ENCODE measurements at regions of chr11 and their contacts with region 1.

Region 1: GRCh38 chr11:107741044-107741823 is 29.4 kb upstream of the SLN start:
- DNase-seq: peak; percentile 52
- H3K4me3 ChIP-seq: no peak overlapping the region
- H3K27ac ChIP-seq: no peak overlapping the region
- H3K4me1 ChIP-seq: no peaks in the 10 kb centered on the region
- H3K27me3 ChIP-seq: peaks cover 2% of the 10 kb centered on the region
- CTCF ChIP-seq: peak; percentile 75

Region 2: GRCh38 chr11:107770551-107770951 is 29.3 kb after region 1 on chr11:
- CTCF ChIA-PET with region 1: interaction called, 7 read pairs
- POLR2A ChIA-PET with region 1: no interaction called
- intact Hi-C with region 1: loop called (anchors 2 kb)
- DNase-seq: peak; percentile 16
- H3K4me3 ChIP-seq: no peak overlapping the region
- H3K27ac ChIP-seq: no peak overlapping the region
- H3K4me1 ChIP-seq: no peaks in the 10 kb centered on the region
- H3K27me3 ChIP-seq: no peaks in the 10 kb centered on the region
- CTCF ChIP-seq: no peak

Region 3: DNA sequence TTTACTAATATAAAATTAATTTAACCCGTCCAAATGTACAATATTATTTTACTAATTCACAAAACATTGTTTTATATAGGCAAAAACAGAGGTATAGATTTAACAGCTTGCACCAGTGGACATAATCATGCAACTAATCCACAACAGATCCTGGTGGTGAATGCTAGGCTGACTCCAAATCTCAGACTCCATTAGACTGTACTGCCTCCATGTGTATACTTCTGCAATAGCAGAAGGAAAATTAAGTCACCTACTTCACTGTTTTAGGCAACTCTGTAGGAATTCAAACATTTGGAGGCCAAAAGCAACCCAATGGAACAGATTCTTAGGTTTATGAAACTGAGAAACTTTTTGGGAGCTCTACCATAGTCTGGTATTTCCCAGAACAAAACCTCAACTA is 157.0 kb after region 1 on chr11:
- CTCF ChIA-PET with region 1: interaction called, 3 read pairs
- POLR2A ChIA-PET with region 1: no interaction called
- intact Hi-C with region 1: loop called (anchors 2 kb)
- DNase-seq: peak; percentile 65
- H3K4me3 ChIP-seq: no peak overlapping the region
- H3K27ac ChIP-seq: no peak overlapping the region
- H3K4me1 ChIP-seq: no peaks in the 10 kb centered on the region
- H3K27me3 ChIP-seq: peaks cover 5% of the 10 kb centered on the region
- CTCF ChIP-seq: peak; percentile 74